Breast epithelium (tissue), 4 donors: ENCODE measurements at regions of chr10 and their contacts with region 1.

Region 1: GRCh38 chr10:17263580-17263979 is 35.5 kb downstream of the VIM start:
- DNase-seq: no peak
- H3K4me3 ChIP-seq: no peak overlapping the region
- H3K27ac ChIP-seq: no peak overlapping the region
- H3K4me1 ChIP-seq: no peaks in the 10 kb centered on the region
- H3K27me3 ChIP-seq: no peaks in the 10 kb centered on the region
- CTCF ChIP-seq: no peak
- POLR2A ChIP-seq: no peak

Region 2: DNA sequence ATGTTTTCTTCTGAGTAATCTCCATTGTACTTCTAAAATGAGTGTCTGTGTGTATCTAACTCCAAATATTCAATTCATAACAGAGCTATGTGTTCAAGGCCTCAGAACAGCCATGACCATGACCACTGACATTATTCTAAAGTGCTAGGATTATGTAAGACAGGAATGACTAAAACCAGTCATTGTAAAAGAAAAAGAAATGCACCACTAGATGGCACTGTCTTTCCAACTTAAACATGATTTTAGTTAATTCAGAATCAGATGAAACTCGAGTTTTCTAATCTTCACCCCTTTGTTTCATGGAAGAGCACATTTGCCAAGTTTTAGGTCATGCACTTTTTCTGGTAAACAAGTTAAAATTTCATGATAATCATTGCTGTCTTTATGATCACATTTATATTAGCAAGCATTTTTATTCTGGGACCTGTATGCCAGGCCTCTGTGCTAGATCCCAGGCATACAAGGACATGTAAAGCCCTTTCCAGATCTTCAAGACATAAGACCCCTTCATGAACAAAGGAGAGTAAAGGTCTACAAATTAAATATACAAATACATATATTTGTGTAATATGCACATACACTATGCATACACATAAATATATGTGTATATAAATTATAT is 420.2 kb before region 1 on chr10:
- intact Hi-C with region 1: loop called (anchors 5 kb)
- DNase-seq: no peak
- H3K4me3 ChIP-seq: no peak overlapping the region
- H3K27ac ChIP-seq: no peak overlapping the region
- H3K4me1 ChIP-seq: no peaks in the 10 kb centered on the region
- H3K27me3 ChIP-seq: no peaks in the 10 kb centered on the region
- CTCF ChIP-seq: peak in 2 of 3 donors; percentile 57 to 74
- POLR2A ChIP-seq: no peak

Region 3: DNA sequence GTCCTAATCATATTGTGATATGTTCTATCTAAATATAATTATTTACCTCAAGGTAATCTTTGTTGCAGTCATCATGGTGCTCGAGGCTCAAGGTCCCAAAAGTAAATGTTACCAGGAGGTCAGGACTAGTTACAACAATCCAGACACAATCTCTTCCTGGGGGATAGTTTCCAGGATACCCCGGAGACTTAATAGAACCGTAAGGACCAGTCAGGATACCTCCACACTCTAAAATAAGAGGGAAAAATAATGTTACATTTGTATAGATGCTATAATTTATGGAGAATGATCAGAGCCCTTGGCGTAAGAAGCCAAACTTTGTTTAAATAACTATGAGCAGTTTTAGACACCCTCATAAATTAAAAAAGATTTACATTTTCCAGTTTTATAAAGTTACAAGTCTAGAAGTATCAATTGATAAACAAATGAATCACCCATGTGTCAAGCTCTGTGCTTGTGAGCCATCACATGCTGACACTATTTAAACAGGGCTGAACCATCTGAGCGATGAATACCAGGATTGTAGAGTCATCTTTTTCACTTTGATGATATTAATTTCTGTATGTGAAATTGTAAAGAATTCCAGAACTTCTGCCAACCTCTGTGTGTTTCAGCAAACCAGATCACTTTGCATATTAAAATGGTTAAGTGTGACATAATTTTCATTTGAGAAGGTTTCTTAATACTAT is 175.3 kb before region 1 on chr10:
- intact Hi-C with region 1: no loop called
- DNase-seq: no peak
- H3K4me3 ChIP-seq: no peak overlapping the region
- H3K27ac ChIP-seq: no peak overlapping the region
- H3K4me1 ChIP-seq: no peaks in the 10 kb centered on the region
- H3K27me3 ChIP-seq: no peaks in the 10 kb centered on the region
- CTCF ChIP-seq: no peak
- POLR2A ChIP-seq: no peak

Region 4: DNA sequence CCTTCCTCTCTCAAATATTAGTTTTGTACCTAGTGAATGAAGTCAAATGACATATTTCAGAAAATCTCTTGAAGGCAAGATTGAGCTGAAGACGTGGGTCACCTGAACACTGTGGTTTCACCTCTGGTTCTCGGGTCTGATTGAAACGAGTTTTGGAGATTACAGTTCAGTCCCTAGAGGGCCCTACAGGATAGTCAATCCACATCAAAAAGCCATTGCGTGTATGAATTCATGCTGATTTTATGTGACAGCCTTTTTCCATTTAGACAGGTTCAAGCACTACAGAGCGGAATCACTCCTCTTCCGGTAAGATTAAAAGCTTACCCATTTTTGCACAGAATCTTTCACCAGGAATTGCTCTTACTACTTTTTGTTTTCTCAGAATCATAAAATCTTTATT is 26.6 kb after region 1 on chr10:
- intact Hi-C with region 1: no loop called
- DNase-seq: no peak
- H3K4me3 ChIP-seq: no peak overlapping the region
- H3K27ac ChIP-seq: no peak overlapping the region
- H3K4me1 ChIP-seq: no peaks in the 10 kb centered on the region
- H3K27me3 ChIP-seq: no peaks in the 10 kb centered on the region
- CTCF ChIP-seq: peak in 2 of 3 donors; percentile 45 to 60
- POLR2A ChIP-seq: no peak

Region 5: DNA sequence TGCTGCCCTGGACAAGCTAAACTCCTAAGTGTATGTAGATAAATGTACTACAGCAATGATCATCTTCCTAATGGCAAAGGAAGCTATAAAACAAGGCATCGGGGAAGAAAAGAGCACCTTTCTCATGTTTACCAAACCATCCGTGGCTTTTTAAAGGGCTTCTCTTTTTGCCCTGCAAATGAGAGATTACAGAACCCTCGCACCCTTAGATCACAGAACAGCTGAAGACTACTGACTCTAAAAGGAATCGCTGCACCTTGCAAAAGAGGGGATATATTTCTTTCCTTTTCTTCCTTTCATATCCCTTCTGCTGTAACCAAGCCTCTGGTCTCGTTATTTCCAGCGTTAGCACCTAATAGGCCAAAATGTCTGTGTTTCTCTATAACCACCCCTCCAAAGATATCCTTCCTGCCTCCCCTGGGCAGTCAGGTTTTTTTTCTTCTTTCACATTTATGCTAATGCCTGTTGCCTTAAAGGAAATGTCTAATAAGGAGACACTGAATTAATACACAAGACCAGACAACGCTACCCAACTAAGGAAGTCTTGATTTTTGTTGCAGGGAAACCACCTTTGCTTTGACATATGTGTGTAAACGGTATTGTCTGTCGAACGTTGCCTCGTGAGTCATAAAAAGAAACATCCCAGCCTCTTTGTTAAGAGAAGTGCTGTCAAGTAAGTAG is 180.3 kb after region 1 on chr10:
- intact Hi-C with region 1: no loop called
- DNase-seq: no peak
- H3K4me3 ChIP-seq: no peak overlapping the region
- H3K27ac ChIP-seq: peak overlapping the region; percentile 82 to 89
- H3K4me1 ChIP-seq: peaks cover 0 to 6% of the 10 kb centered on the region in 2 donors
- H3K27me3 ChIP-seq: no peaks in the 10 kb centered on the region
- CTCF ChIP-seq: no peak
- POLR2A ChIP-seq: no peak

Region 6: GRCh38 chr10:18594574-18595156 is 1331.1 kb after region 1 on chr10:
- intact Hi-C with region 1: no loop called
- DNase-seq: no peak
- H3K4me3 ChIP-seq: no peak overlapping the region
- H3K27ac ChIP-seq: no peak overlapping the region
- H3K4me1 ChIP-seq: no peaks in the 10 kb centered on the region
- H3K27me3 ChIP-seq: no peaks in the 10 kb centered on the region
- CTCF ChIP-seq: no peak
- POLR2A ChIP-seq: no peak